ENCODE measurements at regions of chr10 and their contacts with region 1.

Region 1: GRCh38 chr10:68331455-68332258 is at the start of gene HNRNPH3:
- DNase-seq: peak; percentile 99
- ATAC-seq: peak; percentile 88
- H3K4me3 Mint-ChIP-seq: peak within 1 kb of the TSS; percentile 97
- H3K27ac Mint-ChIP-seq: peak within 1 kb of the TSS; percentile 100
- H3K4me1 Mint-ChIP-seq: peaks cover 41% of the 10 kb centered on the region
- H3K27me3 Mint-ChIP-seq: no peaks in the 10 kb centered on the region
- total RNA-seq, gene HNRNPH3: 126 to 157 TPM

Region 2: GRCh38 chr10:67884313-67884841 is 447.3 kb before region 1 on chr10 and contains the start of gene SIRT1:
- CTCF ChIA-PET with region 1: no interaction called
- POLR2A ChIA-PET with region 1: no interaction called
- intact Hi-C with region 1: loop called (anchors 1 kb)
- DNase-seq: peak; percentile 93
- ATAC-seq: peak; percentile 74
- H3K4me3 Mint-ChIP-seq: peak within 1 kb of the TSS; percentile 93
- H3K27ac Mint-ChIP-seq: peak within 1 kb of the TSS; percentile 93
- H3K4me1 Mint-ChIP-seq: peaks cover 25% of the 10 kb centered on the region
- H3K27me3 Mint-ChIP-seq: no peaks in the 10 kb centered on the region
- total RNA-seq, gene SIRT1: 19.6 to 23.5 TPM

Region 3: DNA sequence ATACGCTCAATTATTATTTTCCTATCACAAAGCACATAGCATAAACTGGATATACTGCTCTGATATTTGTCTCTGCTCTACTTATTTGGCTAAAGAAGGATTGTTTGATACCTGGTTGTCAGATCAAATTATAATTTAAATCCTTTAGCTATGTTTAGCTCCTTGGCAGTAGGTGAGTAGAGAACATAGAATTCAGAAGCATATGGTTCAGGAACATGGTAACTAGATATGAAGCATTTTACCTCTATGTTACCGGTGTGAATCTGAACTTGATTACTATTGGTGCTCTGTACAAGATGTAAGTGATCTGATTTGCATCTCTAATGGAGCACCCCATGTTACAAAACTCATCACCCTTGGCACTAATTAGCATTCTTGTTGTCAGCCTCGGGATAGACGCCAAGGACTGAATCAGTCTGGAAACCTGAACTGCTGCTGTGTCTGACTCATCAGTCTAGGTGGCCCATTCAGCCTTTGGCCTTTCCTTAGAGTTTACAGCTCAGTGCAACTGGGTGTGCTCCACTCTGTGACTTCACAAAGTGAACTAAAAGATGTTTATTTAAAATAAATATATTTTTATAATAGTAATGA is 234.6 kb before region 1 on chr10:
- CTCF ChIA-PET with region 1: no interaction called
- POLR2A ChIA-PET with region 1: no interaction called
- intact Hi-C with region 1: no loop called
- DNase-seq: no peak
- ATAC-seq: peak; percentile 53
- H3K4me3 Mint-ChIP-seq: no peak overlapping the region
- H3K27ac Mint-ChIP-seq: no peak overlapping the region
- H3K4me1 Mint-ChIP-seq: no peaks in the 10 kb centered on the region
- H3K27me3 Mint-ChIP-seq: no peaks in the 10 kb centered on the region

Region 4: GRCh38 chr10:68184546-68184945 is 147.1 kb before region 1 on chr10:
- CTCF ChIA-PET with region 1: no interaction called
- POLR2A ChIA-PET with region 1: no interaction called
- intact Hi-C with region 1: no loop called
- DNase-seq: no peak
- ATAC-seq: no peak
- H3K4me3 Mint-ChIP-seq: no peak overlapping the region
- H3K27ac Mint-ChIP-seq: no peak overlapping the region
- H3K4me1 Mint-ChIP-seq: no peaks in the 10 kb centered on the region
- H3K27me3 Mint-ChIP-seq: peaks cover 19% of the 10 kb centered on the region

Region 5: DNA sequence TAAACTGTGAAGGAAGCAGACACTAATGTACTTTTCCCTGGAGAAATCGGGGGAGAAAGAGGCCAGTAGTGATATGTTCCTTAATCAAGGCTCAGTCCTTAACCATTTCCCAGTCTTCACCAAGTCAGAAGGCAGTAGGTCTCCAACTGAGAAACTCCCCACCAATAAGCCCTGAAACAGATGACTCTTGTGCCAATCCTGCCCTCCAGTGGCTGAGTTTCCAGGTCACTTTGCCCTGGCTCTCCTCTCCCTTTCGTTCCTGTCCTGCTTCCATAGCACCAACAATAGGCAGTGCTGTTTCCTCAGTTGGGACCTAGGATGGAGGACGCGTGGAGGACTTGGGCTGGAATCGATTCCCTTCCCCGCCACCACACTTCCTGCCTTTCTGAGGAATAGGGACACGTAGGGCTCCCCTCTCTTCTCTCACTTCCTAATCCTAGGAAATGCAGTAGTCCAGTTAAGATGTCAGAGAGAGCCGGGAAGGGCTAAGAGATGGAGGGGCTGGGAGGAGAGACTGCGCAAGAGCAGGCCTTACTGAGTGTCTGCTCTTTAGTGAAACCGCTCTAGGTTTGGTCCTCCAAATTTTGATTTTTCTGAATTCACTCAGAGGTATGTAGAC is 123.1 kb before region 1 on chr10:
- CTCF ChIA-PET with region 1: interaction called, 11 read pairs
- POLR2A ChIA-PET with region 1: no interaction called
- intact Hi-C with region 1: no loop called
- DNase-seq: peak; percentile 53
- ATAC-seq: peak; percentile 49
- H3K4me3 Mint-ChIP-seq: no peak overlapping the region
- H3K27ac Mint-ChIP-seq: no peak overlapping the region
- H3K4me1 Mint-ChIP-seq: no peaks in the 10 kb centered on the region
- H3K27me3 Mint-ChIP-seq: peaks cover 9% of the 10 kb centered on the region

Region 6: GRCh38 chr10:68362590-68362989 is 30.9 kb after region 1 on chr10:
- CTCF ChIA-PET with region 1: interaction called, 3 read pairs
- POLR2A ChIA-PET with region 1: interaction called, 3 read pairs
- intact Hi-C with region 1: loop called in 1 of 2 experiments (anchors 1 kb)
- DNase-seq: no peak
- ATAC-seq: no peak
- H3K4me3 Mint-ChIP-seq: no peak overlapping the region
- H3K27ac Mint-ChIP-seq: no peak overlapping the region
- H3K4me1 Mint-ChIP-seq: no peaks in the 10 kb centered on the region
- H3K27me3 Mint-ChIP-seq: no peaks in the 10 kb centered on the region

Region 7: GRCh38 chr10:68720793-68721672 is 389.4 kb after region 1 on chr10 and contains the start of gene CCAR1:
- CTCF ChIA-PET with region 1: no interaction called
- POLR2A ChIA-PET with region 1: no interaction called
- intact Hi-C with region 1: loop called (anchors 1 to 5 kb)
- DNase-seq: peak; percentile 98
- ATAC-seq: peak; percentile 100
- H3K4me3 Mint-ChIP-seq: peak within 1 kb of the TSS; percentile 91
- H3K27ac Mint-ChIP-seq: peak within 1 kb of the TSS; percentile 96
- H3K4me1 Mint-ChIP-seq: peaks cover 9% of the 10 kb centered on the region
- H3K27me3 Mint-ChIP-seq: no peaks in the 10 kb centered on the region
- total RNA-seq, gene CCAR1: 89.5 to 125 TPM

Region 8: DNA sequence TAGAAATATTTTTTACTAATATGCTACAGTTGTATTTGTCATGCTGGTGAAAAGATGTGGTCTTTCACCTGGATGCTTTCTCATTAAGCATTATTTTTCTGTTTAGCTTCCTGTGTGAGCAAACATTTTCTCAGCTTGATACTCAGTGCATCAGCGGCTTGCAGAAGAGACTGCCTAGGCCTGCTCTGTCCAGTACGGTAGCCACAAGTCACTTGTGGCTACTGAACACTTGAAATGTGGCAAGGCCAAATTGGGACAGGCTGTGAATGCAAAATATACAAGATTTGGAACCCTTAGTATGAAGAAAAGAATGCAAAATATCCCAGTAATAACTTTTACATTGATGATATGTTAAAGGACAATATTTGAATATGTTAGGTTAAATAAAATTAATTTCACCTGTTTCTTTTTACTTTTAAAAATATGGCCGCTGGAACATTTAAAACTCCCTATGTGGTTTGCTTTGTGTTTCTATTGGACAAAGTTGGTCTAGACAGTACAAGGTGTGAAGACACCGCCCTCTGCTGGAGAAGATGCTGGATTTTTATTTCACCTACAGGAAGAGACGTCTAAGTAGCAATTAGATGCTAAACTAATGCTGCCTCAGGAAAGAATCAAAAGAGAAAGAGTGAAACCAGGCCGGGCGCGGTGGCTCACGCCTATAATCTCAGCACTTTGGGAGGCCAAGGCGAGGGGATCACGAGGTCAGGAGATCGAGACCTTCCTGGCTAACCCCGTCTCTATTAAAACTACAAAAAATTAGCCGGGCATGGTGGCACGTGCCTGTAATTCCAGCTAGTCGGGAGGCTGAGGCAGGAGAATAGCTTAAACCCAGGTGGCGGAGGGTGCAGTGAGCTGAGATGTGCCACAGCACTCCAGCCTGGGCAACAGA is 761.5 kb after region 1 on chr10:
- CTCF ChIA-PET with region 1: no interaction called
- POLR2A ChIA-PET with region 1: no interaction called
- intact Hi-C with region 1: loop called in 1 of 2 experiments (anchors 10 kb)
- DNase-seq: peak; percentile 90
- ATAC-seq: peak; percentile 22
- H3K4me3 Mint-ChIP-seq: peak overlapping the region; percentile 30
- H3K27ac Mint-ChIP-seq: peak overlapping the region; percentile 81
- H3K4me1 Mint-ChIP-seq: peaks cover 60% of the 10 kb centered on the region
- H3K27me3 Mint-ChIP-seq: no peaks in the 10 kb centered on the region

Region 9: GRCh38 chr10:69217119-69217754 is 885.6 kb after region 1 on chr10:
- CTCF ChIA-PET with region 1: no interaction called
- POLR2A ChIA-PET with region 1: no interaction called
- intact Hi-C with region 1: no loop called
- DNase-seq: no peak
- ATAC-seq: no peak
- H3K4me3 Mint-ChIP-seq: no peak overlapping the region
- H3K27ac Mint-ChIP-seq: no peak overlapping the region
- H3K4me1 Mint-ChIP-seq: peaks cover 47% of the 10 kb centered on the region
- H3K27me3 Mint-ChIP-seq: no peaks in the 10 kb centered on the region

Region 10: DNA sequence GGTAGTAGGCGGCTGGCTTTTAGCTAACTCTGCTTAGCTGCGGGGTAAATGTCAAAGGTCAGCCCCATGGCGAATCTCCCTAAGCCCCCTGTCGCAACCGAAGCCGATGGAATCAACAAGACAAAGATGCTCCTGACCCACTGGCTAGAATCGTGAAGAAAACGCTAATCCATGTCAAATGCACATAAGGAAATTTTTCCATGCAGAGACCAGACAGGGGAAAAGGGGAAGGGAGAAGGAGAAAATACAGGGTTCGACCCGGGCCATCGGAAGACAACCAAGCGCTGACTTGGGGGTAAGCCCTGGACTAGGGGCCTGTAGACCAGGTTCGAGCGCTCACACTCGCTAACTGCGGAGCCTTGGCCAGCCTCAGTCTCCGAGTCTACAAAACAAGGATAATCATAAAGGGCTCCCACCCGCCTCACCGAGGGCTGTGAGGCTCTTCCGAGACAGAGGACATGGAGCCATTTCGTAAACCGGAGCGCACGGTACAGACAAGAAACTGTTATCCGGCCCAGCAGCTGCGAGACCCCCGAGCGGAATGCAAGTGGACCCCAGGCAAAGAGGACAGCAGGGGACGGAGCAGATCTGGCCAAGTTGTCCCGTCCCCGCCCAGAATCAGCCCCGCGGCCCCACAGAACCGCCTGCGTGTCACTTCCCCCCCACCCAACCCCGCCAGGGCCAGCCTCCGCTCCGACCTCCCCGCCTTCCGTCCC is 1838.2 kb after region 1 on chr10:
- CTCF ChIA-PET with region 1: no interaction called
- POLR2A ChIA-PET with region 1: no interaction called
- intact Hi-C with region 1: no loop called
- DNase-seq: no peak
- ATAC-seq: peak; percentile 5
- H3K4me3 Mint-ChIP-seq: peak overlapping the region; percentile 94
- H3K27ac Mint-ChIP-seq: peak overlapping the region; percentile 84
- H3K4me1 Mint-ChIP-seq: peaks cover 64% of the 10 kb centered on the region
- H3K27me3 Mint-ChIP-seq: no peaks in the 10 kb centered on the region